ENCODE measurements at regions of chr6 and their contacts with region 1.

Region 1: GRCh38 chr6:117194978-117195377 is 70.4 kb upstream of the VGLL2 start:
- DNase-seq: no peak
- H3K4me3 Mint-ChIP-seq: no peak overlapping the region
- H3K27ac Mint-ChIP-seq: no peak overlapping the region
- H3K4me1 Mint-ChIP-seq: peaks cover 25% of the 10 kb centered on the region
- H3K27me3 Mint-ChIP-seq: no peaks in the 10 kb centered on the region
- CTCF ChIP-seq: no peak

Region 2: GRCh38 chr6:116881236-116881635 is 313.7 kb before region 1 on chr6:
- CTCF ChIA-PET with region 1: no interaction called
- intact Hi-C with region 1: loop called (anchors 5 kb)
- DNase-seq: no peak
- H3K4me3 Mint-ChIP-seq: no peak overlapping the region
- H3K27ac Mint-ChIP-seq: no peak overlapping the region
- H3K4me1 Mint-ChIP-seq: no peaks in the 10 kb centered on the region
- H3K27me3 Mint-ChIP-seq: peaks cover 7% of the 10 kb centered on the region
- CTCF ChIP-seq: no peak

Region 3: DNA sequence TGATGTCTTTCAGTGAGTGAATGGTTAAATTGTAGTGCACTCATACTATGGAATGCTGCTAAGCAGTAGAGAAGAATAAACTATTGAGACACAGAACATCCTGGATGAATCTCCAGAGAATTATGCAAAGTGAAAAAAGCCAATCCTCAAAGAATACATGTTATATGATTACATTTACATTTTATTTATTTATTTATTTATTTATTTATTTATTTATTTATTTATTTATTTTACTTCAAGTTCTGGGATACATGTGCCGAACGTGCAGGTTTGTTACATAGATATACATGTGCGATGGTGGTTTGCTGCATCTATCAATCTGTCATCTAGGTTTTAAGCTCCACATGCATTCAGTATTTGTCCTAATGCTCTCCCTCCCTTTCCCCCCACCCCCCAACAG is 105.4 kb before region 1 on chr6:
- CTCF ChIA-PET with region 1: no interaction called
- intact Hi-C with region 1: no loop called
- DNase-seq: no peak
- H3K4me3 Mint-ChIP-seq: no peak overlapping the region
- H3K27ac Mint-ChIP-seq: no peak overlapping the region
- H3K4me1 Mint-ChIP-seq: no peaks in the 10 kb centered on the region
- H3K27me3 Mint-ChIP-seq: no peaks in the 10 kb centered on the region
- CTCF ChIP-seq: no peak